HCT116 (cell line): ENCODE measurements at regions of chr15 and their contacts with region 1.

Region 1: GRCh38 chr15:49145651-49146609 is 9.5 kb downstream of the COPS2 start:
- DNase-seq: peak; percentile 35
- ATAC-seq: peak; percentile 64
- H3K4me3 ChIP-seq: no peak overlapping the region
- H3K27ac ChIP-seq: no peak overlapping the region
- H3K4me1 ChIP-seq: no peaks in the 10 kb centered on the region
- H3K27me3 ChIP-seq: no peaks in the 10 kb centered on the region
- CTCF ChIP-seq: peak; percentile 37 to 81 (median 65); a peak in 5 of 6 replicates
- POLR2A ChIP-seq: no peak
- RAD21 ChIP-seq: peak; percentile 56

Region 2: DNA sequence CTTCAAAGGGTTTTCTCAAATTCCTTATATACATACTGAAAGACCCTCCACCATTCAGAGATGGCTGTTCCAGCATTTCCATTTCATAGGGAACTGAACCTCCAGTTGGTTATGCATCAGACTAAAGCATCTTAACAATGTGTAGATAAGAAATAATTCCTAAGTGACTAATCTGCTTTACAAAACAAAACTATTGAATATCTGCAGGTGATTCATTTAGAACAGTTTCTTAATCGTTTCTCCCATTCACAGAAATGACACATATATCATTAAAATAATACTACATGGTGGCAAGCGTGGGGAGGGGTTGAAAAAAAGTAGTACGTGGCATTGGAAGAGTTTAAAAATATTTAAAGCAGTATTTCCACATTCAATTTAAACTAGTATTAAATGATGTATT is 10.0 kb before region 1 on chr15:
- CTCF ChIA-PET with region 1: interaction called, 12 read pairs
- POLR2A ChIA-PET with region 1: interaction called, 3 read pairs
- RAD21 ChIA-PET with region 1: interaction called in 1 of 2 experiments, 3 read pairs
- intact Hi-C with region 1: no loop called
- DNase-seq: no peak
- ATAC-seq: no peak
- H3K4me3 ChIP-seq: no peak overlapping the region
- H3K27ac ChIP-seq: no peak overlapping the region
- H3K4me1 ChIP-seq: no peaks in the 10 kb centered on the region
- H3K27me3 ChIP-seq: no peaks in the 10 kb centered on the region
- CTCF ChIP-seq: no peak
- POLR2A ChIP-seq: no peak
- RAD21 ChIP-seq: no peak

Region 3: GRCh38 chr15:49675041-49675440 is 529.1 kb after region 1 on chr15:
- CTCF ChIA-PET with region 1: no interaction called
- POLR2A ChIA-PET with region 1: no interaction called
- RAD21 ChIA-PET with region 1: no interaction called
- intact Hi-C with region 1: no loop called
- DNase-seq: no peak
- ATAC-seq: no peak; the same call in 1 of the 2 replicates
- H3K4me3 ChIP-seq: no peak overlapping the region
- H3K27ac ChIP-seq: no peak overlapping the region
- H3K4me1 ChIP-seq: peaks cover 3 to 7% of the 10 kb centered on the region in 2 experiments; a peak in 1 of 4 replicates
- H3K27me3 ChIP-seq: no peaks in the 10 kb centered on the region
- CTCF ChIP-seq: no peak; a peak in 1 of 6 replicates
- POLR2A ChIP-seq: no peak
- RAD21 ChIP-seq: no peak